Activated CD4-positive, alpha-beta T cell treated with anti-CD3 and anti-CD28 coated beads, Interleukin-2, amount 10 ng/mL, durations not matched to agents 24 days and 14 days (primary cell): ENCODE measurements at regions of chr10 and their contacts with region 1.

Region 1: GRCh38 chr10:96863922-96864543 is 31.9 kb downstream of the LCOR start:
- DNase-seq: no peak
- H3K4me3 Mint-ChIP-seq: no peak overlapping the region
- H3K27ac Mint-ChIP-seq: peak overlapping the region; percentile 76
- H3K4me1 Mint-ChIP-seq: peaks cover 14% of the 10 kb centered on the region
- H3K27me3 Mint-ChIP-seq: no peaks in the 10 kb centered on the region

Region 2: DNA sequence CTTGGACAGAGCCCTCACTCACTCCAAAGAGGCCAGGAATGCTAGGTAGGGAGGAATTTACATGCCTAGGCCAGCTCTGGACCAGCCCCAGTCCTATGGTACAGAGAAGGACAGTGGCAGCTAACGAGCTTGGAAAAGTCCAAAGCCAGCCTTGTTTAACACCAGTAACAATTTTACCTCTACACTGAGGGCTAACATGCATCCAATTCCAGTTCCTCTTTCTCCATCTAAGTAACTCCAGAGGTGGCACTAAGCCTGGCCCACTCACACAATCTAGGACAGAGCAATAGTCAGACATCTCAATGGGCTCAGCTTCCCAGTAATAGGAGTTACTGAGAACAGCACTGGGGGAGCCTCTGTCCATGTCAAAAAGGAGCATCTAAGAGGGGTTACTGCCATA is 37.6 kb before region 1 on chr10:
- intact Hi-C with region 1: no loop called
- DNase-seq: no peak
- H3K4me3 Mint-ChIP-seq: no peak overlapping the region
- H3K27ac Mint-ChIP-seq: no peak overlapping the region
- H3K4me1 Mint-ChIP-seq: peaks cover 10% of the 10 kb centered on the region
- H3K27me3 Mint-ChIP-seq: peaks cover 6% of the 10 kb centered on the region

Region 3: GRCh38 chr10:96838529-96838928 is 25.5 kb before region 1 on chr10:
- intact Hi-C with region 1: no loop called
- DNase-seq: no peak
- H3K4me3 Mint-ChIP-seq: no peak overlapping the region
- H3K27ac Mint-ChIP-seq: no peak overlapping the region
- H3K4me1 Mint-ChIP-seq: peaks cover 41% of the 10 kb centered on the region
- H3K27me3 Mint-ChIP-seq: no peaks in the 10 kb centered on the region

Region 4: DNA sequence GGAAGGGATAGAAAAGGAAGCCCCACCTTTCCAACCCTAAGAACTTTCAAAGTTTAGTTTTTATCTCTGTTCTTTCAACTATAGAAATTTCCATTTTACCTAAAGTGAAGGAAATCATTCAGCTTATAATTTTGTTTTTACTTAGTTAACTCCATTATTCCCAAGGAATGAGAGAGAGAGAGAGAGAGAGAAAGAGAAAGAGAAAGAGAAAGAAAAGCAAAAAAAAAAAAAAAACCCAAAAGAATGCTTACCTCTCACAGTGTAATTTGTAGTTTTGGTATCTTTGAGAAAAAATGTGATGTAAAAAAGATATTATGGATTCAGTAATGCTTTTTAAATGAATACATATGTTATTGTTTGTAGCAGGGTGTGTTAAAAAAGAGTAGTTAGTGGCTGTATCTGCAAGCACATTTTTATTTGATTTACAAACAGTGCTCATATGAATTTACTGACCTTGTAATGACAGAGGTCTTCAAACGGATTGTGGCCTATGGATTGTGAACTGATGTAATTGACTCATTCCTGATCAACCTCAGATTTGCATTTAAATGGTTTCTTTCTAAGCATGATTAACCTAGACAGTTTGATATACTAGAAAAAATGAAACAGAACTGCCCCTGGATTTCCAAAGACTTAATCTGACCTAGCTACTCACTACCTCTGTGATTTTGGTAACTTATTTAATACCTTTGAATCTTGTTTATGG is 33.0 kb after region 1 on chr10:
- intact Hi-C with region 1: loop called (anchors 5 kb)
- DNase-seq: no peak
- H3K4me3 Mint-ChIP-seq: peak overlapping the region; percentile 25
- H3K27ac Mint-ChIP-seq: peak overlapping the region; percentile 36
- H3K4me1 Mint-ChIP-seq: peaks cover 21% of the 10 kb centered on the region
- H3K27me3 Mint-ChIP-seq: no peaks in the 10 kb centered on the region

Region 5: DNA sequence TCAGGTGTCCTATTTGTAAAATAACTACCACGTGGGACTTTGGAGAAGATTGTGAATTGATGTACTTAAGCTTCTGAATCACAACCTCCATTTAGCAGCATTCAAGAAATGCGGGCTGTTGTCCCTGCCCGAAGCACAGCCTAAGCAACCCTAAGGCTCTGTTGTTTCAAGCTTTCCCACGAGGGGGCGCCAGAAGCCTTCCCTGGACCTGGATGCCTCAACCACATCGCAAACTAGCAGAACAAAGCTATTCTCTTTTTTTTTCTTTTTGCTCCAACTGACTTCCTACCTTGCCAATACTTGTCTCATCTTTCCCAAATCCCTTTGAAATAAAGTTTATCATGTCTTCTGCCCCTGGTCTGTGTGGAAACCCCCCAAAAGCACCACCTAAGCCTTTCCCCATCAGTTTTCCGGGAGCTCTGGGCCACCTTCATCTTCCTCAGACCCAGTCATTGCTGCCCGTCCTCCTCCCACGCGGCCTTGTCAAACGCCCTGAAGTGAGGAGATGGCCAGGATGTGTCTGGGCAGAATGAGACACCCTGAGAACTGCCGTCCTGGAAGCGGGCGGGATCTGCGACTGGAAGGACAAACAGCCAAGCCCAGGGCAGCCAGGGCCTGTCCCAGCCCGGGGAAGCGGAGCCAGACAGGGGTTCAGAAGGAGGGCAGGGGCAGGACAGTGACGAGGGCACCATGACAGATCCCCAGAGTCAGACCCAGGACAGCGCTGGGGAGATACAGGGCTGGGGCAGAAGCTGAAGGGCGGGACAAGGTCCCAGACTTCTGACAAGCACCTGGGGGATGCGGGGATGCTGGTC is 209.0 kb after region 1 on chr10:
- intact Hi-C with region 1: no loop called
- DNase-seq: peak; percentile 93
- H3K4me3 Mint-ChIP-seq: no peak overlapping the region
- H3K27ac Mint-ChIP-seq: no peak overlapping the region
- H3K4me1 Mint-ChIP-seq: peaks cover 8% of the 10 kb centered on the region
- H3K27me3 Mint-ChIP-seq: peaks cover 10% of the 10 kb centered on the region